ENCODE measurements at regions of chr20 and their contacts with region 1.

Region 1: DNA sequence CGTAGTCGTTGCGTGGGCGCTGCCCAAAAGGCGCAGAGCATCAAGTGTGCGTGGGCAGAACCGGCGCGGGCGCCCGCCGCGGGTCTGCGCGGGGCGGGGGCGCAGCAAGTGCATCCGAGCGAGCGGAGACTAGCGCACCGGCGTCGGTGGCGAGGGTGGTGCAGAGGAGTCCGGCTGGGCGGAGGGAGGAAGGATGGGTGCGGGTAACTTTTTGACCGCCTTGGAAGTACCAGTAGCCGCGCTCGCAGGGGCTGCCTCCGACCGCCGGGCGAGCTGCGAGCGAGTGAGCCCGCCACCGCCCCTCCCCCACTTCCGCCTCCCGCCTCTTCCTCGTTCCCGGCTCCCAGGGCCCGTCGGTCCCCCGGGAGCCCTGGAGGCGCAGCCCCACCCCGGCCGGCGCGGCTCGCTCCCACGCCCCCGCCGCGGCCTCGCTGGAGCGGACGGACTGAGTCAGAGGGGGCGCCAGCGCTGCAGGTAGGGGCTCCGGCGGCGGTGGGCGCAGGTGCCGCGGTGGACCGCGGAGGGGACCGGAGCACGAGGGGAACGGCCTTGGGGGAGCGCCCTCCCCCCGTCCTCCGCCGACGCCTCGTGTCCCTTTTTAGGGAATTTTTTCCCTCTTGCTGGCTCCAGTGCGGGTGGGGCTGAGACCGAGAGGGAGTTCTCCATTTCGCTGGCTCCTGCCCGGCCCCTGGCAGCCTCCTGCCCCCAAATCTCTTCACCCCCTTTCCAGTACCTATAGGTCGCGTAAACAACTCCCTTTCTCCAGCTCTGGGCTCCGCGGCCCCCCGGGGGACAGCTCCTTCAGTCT is 1.6 kb upstream of the DBNDD2 start:
- DNase-seq: peak; percentile 52 to 68
- H3K4me3 ChIP-seq: peak overlapping the region; percentile 96
- H3K27ac ChIP-seq: peak overlapping the region; percentile 63
- H3K4me1 ChIP-seq: peaks cover 16% of the 10 kb centered on the region
- H3K27me3 ChIP-seq: no peaks in the 10 kb centered on the region
- CTCF ChIP-seq: no peak

Region 2: DNA sequence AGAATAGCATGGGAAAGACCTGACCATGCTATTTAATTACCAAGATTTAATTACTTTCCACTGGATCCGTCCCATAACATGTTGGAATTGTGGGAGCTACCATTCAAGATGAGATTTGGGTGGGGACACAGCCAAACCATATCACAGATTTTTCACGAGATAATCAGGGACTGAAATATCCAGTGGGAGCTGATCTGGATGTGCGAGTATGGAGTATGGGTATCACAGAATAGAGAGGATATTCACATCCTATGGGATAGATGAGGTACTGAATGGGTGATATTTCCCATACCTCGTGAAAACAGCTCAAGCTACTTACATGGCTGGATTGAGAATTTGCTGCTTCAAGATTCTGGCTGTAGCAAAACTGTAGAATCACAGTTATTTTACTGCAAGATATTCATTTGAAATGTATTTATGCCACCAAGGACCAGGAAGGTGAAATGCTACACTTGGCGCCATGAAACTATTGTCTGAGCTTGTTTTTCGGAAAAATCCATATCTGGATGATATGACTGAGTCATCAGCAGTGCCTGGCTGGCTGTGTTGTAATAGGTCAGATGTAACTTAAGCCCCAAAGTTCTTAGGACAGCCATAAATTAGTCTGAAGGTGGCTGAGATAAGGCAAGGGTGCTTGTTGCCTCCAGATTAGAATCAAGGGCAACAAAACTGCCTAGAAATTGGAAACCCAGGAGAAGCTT is 335.4 kb before region 1 on chr20:
- CTCF ChIA-PET with region 1: no interaction called
- POLR2A ChIA-PET with region 1: no interaction called
- intact Hi-C with region 1: no loop called
- DNase-seq: peak; percentile 50 to 89
- H3K4me3 ChIP-seq: no peak overlapping the region
- H3K27ac ChIP-seq: peak overlapping the region; percentile 25
- H3K4me1 ChIP-seq: peaks cover 34% of the 10 kb centered on the region
- H3K27me3 ChIP-seq: no peaks in the 10 kb centered on the region
- CTCF ChIP-seq: no peak

Region 3: DNA sequence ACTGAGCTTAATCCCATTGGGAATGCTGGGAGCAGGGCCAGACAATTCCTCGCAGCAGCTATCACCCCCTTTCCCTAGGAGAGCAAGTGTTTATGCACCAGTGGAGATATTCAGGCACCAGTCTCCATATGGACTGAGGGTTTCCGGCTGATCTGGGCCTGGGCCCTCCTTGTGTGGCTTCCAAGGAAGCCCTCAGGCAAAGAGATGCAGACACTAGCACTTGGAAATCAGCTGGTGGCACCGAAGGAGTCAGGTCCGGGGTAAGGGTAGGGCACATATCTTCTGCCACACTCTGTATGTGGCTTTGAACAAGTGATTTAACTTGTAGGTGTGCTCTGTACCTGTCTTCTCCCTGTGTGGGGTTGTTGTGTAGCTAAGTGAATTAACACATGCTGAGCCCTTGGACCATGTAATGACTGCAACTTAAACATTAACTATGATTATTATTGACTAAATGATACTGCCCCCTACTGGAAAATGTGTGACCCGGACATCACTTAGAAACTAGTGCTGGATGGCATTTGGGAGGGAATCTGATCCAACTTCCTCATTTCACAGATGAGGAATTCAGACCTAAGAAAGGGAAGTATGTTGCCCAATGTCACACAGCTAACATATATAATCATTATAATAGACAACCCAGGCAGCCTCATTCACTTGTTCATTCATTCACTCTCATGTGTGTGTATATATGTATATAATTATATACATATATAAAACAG is 43.8 kb after region 1 on chr20:
- CTCF ChIA-PET with region 1: no interaction called
- POLR2A ChIA-PET with region 1: no interaction called
- intact Hi-C with region 1: no loop called
- DNase-seq: peak in 1 of 2 experiments; percentile 71
- H3K4me3 ChIP-seq: no peak overlapping the region
- H3K27ac ChIP-seq: no peak overlapping the region
- H3K4me1 ChIP-seq: peaks cover 11% of the 10 kb centered on the region
- H3K27me3 ChIP-seq: no peaks in the 10 kb centered on the region
- CTCF ChIP-seq: peak; percentile 81

Region 4: DNA sequence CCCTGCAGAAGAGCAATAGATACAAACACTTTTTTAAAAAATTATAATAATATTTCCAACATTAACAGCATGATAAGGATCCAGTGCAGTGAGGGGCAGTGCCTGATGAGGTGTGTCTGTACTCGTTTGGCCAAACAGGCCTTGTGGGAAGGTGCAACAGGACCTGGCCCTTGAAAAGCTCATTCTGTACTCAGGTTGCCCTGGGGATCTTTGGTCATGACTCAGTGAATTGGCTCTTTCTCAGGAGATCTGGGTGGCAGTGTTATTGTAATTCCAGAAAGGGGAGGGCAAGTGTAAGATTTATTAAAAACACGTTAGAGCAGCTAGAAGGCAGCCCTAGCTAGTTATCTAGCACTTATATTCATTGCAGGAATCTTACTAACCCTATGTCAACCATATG is 111.8 kb after region 1 on chr20:
- CTCF ChIA-PET with region 1: no interaction called
- POLR2A ChIA-PET with region 1: interaction called, 17 read pairs
- intact Hi-C with region 1: no loop called
- DNase-seq: peak; percentile 85 to 96
- H3K4me3 ChIP-seq: peak overlapping the region; percentile 4; the same call in 1 of the 2 replicates
- H3K27ac ChIP-seq: peak overlapping the region; percentile 83
- H3K4me1 ChIP-seq: peaks cover 24% of the 10 kb centered on the region
- H3K27me3 ChIP-seq: no peaks in the 10 kb centered on the region
- CTCF ChIP-seq: no peak